Naive thymus-derived CD4-positive, alpha-beta T cell (primary cell): ENCODE measurements at regions of chr10 and their contacts with region 1.

Region 1: GRCh38 chr10:110007701-110008517 is at the start of gene ADD3:
- DNase-seq: peak; percentile 82 to 93 (median 90)
- ATAC-seq: peak; percentile 86
- H3K4me3 ChIP-seq: peak within 1 kb of the TSS; percentile 66
- H3K4me3 Mint-ChIP-seq: peak within 1 kb of the TSS in 2 of 10 donors; percentile 99 to 100
- H3K27ac ChIP-seq: peak within 1 kb of the TSS; percentile 88
- H3K27ac Mint-ChIP-seq: peak within 1 kb of the TSS in 7 of 9 donors; percentile 91 to 98 (median 94)
- H3K4me1 ChIP-seq: peaks cover 33 to 36% of the 10 kb centered on the region in 2 donors
- H3K4me1 Mint-ChIP-seq: peaks cover 28 to 54% (median 44%) of the 10 kb centered on the region in 7 donors
- H3K27me3 ChIP-seq: no peaks in the 10 kb centered on the region
- H3K27me3 Mint-ChIP-seq: peaks cover 0 to 6% (median 0%) of the 10 kb centered on the region in 5 donors
- total RNA-seq, gene ADD3: 281 to 463 (median 342) TPM

Region 2: DNA sequence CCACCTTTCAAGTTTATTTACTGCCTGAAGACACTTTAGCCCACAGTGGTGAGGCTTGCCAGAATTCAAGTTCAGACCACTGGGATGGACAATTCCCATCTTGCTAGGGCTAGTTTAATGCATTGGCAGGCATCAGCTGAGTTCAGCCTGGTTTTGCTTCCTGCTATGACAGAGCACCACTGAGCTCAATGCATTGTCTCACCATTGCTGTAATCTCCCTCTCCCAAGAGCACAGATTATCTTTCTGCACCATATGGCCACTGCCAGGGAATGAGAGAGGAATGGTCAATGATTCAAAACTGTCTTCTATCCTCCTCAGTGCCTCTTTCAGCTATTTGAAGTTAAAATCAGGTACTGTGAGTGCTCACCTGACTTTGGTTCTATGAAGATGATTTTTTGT is 245.4 kb before region 1 on chr10:
- CTCF ChIA-PET with region 1: no interaction called
- POLR2A ChIA-PET with region 1: no interaction called
- intact Hi-C with region 1: no loop called
- DNase-seq: no peak
- ATAC-seq: no peak
- H3K4me3 ChIP-seq: no peak overlapping the region
- H3K4me3 Mint-ChIP-seq: no peak overlapping the region
- H3K27ac ChIP-seq: no peak overlapping the region
- H3K27ac Mint-ChIP-seq: no peak overlapping the region
- H3K4me1 ChIP-seq: no peaks in the 10 kb centered on the region
- H3K4me1 Mint-ChIP-seq: no peaks in the 10 kb centered on the region
- H3K27me3 ChIP-seq: no peaks in the 10 kb centered on the region
- H3K27me3 Mint-ChIP-seq: peaks cover 0 to 16% (median 6%) of the 10 kb centered on the region in 5 donors

Region 3: DNA sequence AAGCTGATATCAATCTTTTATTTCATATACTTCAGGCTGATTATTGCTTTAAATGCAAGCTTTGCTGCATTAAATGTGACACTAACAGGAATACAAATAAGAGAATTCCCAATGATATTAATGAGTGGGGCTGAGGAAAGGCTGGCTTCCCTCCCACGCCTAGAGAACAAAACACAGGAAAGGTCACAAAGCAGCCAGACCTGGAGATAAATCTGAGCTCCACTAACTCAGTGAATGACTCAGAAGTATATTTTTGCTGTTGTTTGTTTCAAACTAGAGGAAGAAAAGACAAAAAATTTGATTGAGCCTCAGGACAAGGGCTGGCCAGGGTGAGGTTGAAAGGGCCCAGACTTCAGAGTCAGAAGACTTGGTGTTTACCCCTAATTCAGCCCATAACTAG is 172.7 kb before region 1 on chr10:
- CTCF ChIA-PET with region 1: no interaction called
- POLR2A ChIA-PET with region 1: no interaction called
- intact Hi-C with region 1: no loop called
- DNase-seq: no peak
- ATAC-seq: no peak
- H3K4me3 ChIP-seq: no peak overlapping the region
- H3K4me3 Mint-ChIP-seq: no peak overlapping the region
- H3K27ac ChIP-seq: no peak overlapping the region
- H3K27ac Mint-ChIP-seq: no peak overlapping the region
- H3K4me1 ChIP-seq: no peaks in the 10 kb centered on the region
- H3K4me1 Mint-ChIP-seq: no peaks in the 10 kb centered on the region
- H3K27me3 ChIP-seq: peaks cover 0 to 6% of the 10 kb centered on the region in 2 donors
- H3K27me3 Mint-ChIP-seq: peaks cover 10 to 27% (median 15%) of the 10 kb centered on the region in 5 donors

Region 4: GRCh38 chr10:109934958-109935706 is 72.8 kb before region 1 on chr10:
- CTCF ChIA-PET with region 1: interaction called, 4 read pairs
- POLR2A ChIA-PET with region 1: interaction called, 3 read pairs
- intact Hi-C with region 1: loop called in 1 of 2 experiments (anchors 1 kb)
- DNase-seq: peak in 8 of 9 donors; percentile 23 to 54 (median 46)
- ATAC-seq: peak; percentile 47
- H3K4me3 ChIP-seq: peak overlapping the region; percentile 33
- H3K4me3 Mint-ChIP-seq: peak overlapping the region; percentile 72 to 97 (median 87)
- H3K27ac ChIP-seq: peak overlapping the region; percentile 64
- H3K27ac Mint-ChIP-seq: peak overlapping the region; percentile 88 to 99 (median 96)
- H3K4me1 ChIP-seq: peaks cover 36 to 56% of the 10 kb centered on the region in 2 donors
- H3K4me1 Mint-ChIP-seq: peaks cover 33 to 83% (median 71%) of the 10 kb centered on the region in 7 donors
- H3K27me3 ChIP-seq: no peaks in the 10 kb centered on the region
- H3K27me3 Mint-ChIP-seq: peaks cover 0 to 8% (median 0%) of the 10 kb centered on the region in 5 donors

Region 5: DNA sequence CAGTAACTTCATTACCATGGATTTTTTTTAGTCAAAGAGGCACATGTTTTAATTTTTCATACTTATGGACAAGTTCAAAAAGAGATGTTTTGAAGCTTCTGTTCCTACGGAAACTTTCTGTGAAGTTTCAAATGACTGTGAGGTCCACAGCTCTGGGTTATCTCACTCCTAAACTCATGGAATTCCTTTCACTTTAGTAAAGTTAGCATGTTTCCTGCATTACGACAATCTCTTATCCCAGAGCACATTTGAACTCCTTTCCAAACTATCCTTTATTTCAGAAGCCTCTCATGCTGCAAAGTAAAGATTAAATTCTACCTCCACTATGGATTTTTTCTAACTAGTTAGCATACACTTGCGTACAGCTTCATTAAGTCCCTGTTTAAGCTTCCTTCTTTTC is 15.4 kb before region 1 on chr10:
- CTCF ChIA-PET with region 1: interaction called, 5 read pairs
- POLR2A ChIA-PET with region 1: interaction called, 4 read pairs
- intact Hi-C with region 1: loop called in 1 of 2 experiments (anchors 1 kb)
- DNase-seq: no peak
- ATAC-seq: no peak
- H3K4me3 ChIP-seq: no peak overlapping the region
- H3K4me3 Mint-ChIP-seq: no peak overlapping the region
- H3K27ac ChIP-seq: no peak overlapping the region
- H3K27ac Mint-ChIP-seq: peak overlapping the region in 1 of 9 donors; percentile 69
- H3K4me1 ChIP-seq: no peaks in the 10 kb centered on the region
- H3K4me1 Mint-ChIP-seq: peaks cover 0 to 34% (median 18%) of the 10 kb centered on the region in 7 donors
- H3K27me3 ChIP-seq: no peaks in the 10 kb centered on the region
- H3K27me3 Mint-ChIP-seq: peaks cover 0 to 22% (median 0%) of the 10 kb centered on the region in 5 donors

Region 6: GRCh38 chr10:110067960-110068770 is 60.3 kb after region 1 on chr10:
- CTCF ChIA-PET with region 1: interaction called, 3 read pairs
- POLR2A ChIA-PET with region 1: interaction called, 11 read pairs
- intact Hi-C with region 1: loop called (anchors 1 to 2 kb)
- DNase-seq: peak in 7 of 9 donors; percentile 40 to 69 (median 52)
- ATAC-seq: peak; percentile 92
- H3K4me3 ChIP-seq: peak overlapping the region; percentile 18
- H3K4me3 Mint-ChIP-seq: peak overlapping the region; percentile 39 to 91 (median 78)
- H3K27ac ChIP-seq: peak overlapping the region; percentile 57
- H3K27ac Mint-ChIP-seq: peak overlapping the region; percentile 83 to 96 (median 92)
- H3K4me1 ChIP-seq: peaks cover 76 to 84% of the 10 kb centered on the region in 2 donors
- H3K4me1 Mint-ChIP-seq: peaks cover 65 to 100% (median 95%) of the 10 kb centered on the region in 7 donors
- H3K27me3 ChIP-seq: no peaks in the 10 kb centered on the region
- H3K27me3 Mint-ChIP-seq: no peaks in the 10 kb centered on the region

Region 7: DNA sequence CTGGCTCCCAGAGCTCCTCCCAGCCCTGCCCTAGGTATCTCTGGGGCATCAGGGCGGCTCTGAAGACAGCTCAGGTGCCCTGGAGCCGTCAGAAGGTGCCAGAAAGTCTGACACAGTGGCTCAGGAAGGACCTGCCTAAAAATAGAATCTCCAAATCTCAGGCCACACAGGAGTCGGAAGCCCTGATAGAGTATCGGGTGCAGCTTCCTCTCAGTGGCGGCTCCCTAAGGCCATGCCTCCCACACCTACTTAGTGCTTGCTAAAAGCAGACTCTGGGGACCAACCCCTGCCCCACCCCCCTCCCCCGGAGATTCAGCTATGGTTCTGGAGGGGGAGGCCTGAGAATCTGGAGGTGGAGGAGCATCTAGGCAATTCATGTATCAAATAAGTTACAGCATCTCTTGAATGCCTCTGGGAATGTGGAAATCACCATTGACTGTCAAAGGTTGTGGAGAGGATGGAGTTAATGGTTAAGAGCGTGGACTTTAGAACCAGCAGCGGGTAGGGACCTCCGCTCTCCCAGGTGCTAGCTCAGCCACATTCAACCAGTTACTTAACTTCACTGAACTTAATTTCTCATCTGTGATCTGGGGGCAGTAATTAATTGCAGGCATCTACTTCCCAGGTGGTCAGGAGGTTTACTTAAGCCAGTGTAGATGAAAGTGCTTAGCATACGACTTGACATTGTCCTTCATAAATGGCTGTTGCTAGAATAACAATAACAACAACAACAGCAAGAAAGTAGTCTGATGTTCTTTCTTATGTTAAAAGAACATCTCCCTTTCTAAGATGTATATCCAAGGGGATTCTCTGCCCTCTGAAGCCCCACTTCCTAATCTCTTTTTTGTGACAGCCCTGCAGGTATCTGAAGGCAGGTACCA is 160.9 kb after region 1 on chr10:
- CTCF ChIA-PET with region 1: no interaction called
- POLR2A ChIA-PET with region 1: no interaction called
- intact Hi-C with region 1: no loop called
- DNase-seq: no peak
- ATAC-seq: peak; percentile 22
- H3K4me3 ChIP-seq: no peak overlapping the region
- H3K4me3 Mint-ChIP-seq: peak overlapping the region in 6 of 10 donors; percentile 21 to 49 (median 33)
- H3K27ac ChIP-seq: no peak overlapping the region
- H3K27ac Mint-ChIP-seq: no peak overlapping the region
- H3K4me1 ChIP-seq: peaks cover 3 to 11% of the 10 kb centered on the region in 2 donors
- H3K4me1 Mint-ChIP-seq: peaks cover 22 to 35% (median 29%) of the 10 kb centered on the region in 7 donors
- H3K27me3 ChIP-seq: peaks cover 4 to 5% of the 10 kb centered on the region in 2 donors
- H3K27me3 Mint-ChIP-seq: peaks cover 64 to 89% (median 74%) of the 10 kb centered on the region in 5 donors

Region 8: GRCh38 chr10:110225756-110226542 is 218.0 kb after region 1 on chr10:
- CTCF ChIA-PET with region 1: no interaction called
- POLR2A ChIA-PET with region 1: interaction called, 3 read pairs
- intact Hi-C with region 1: loop called (anchors 1 kb)
- DNase-seq: peak; percentile 83 to 91 (median 88)
- ATAC-seq: peak; percentile 73
- H3K4me3 ChIP-seq: peak overlapping the region; percentile 75
- H3K4me3 Mint-ChIP-seq: peak overlapping the region; percentile 87 to 99 (median 94)
- H3K27ac ChIP-seq: peak overlapping the region; percentile 92
- H3K27ac Mint-ChIP-seq: peak overlapping the region; percentile 78 to 97 (median 96)
- H3K4me1 ChIP-seq: peaks cover 16 to 27% of the 10 kb centered on the region in 2 donors
- H3K4me1 Mint-ChIP-seq: peaks cover 27 to 68% (median 49%) of the 10 kb centered on the region in 7 donors
- H3K27me3 ChIP-seq: no peaks in the 10 kb centered on the region
- H3K27me3 Mint-ChIP-seq: no peaks in the 10 kb centered on the region

Region 9: DNA sequence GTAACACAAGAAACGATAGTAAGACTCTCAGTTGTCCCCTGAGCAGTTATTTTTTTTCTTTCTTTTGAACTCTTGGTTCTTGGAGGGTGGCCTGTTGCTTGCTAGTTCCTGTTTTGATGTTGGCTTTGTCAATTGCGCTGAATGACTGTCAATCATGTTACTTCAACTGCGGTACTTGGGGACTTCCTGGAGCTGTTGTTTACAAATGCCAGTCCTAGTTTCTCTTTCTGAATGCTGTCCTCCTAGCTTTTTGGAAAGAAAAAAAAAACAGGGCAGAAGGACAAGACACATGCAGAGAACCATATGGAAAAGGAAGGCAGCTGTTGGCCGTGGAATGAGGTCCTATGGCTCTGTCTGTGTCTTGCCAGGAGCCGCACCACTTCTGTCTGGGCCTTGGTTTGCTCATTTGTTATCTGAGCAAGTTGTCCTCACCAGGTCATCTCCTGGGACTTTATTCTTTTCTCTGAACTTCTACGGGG is 856.8 kb after region 1 on chr10:
- CTCF ChIA-PET with region 1: no interaction called
- POLR2A ChIA-PET with region 1: no interaction called
- intact Hi-C with region 1: loop called in 1 of 2 experiments (anchors 5 kb)
- DNase-seq: peak in 7 of 9 donors; percentile 73 to 92 (median 88)
- ATAC-seq: peak; percentile 81
- H3K4me3 ChIP-seq: peak overlapping the region; percentile 46
- H3K4me3 Mint-ChIP-seq: peak overlapping the region; percentile 72 to 88 (median 80)
- H3K27ac ChIP-seq: peak overlapping the region; percentile 100
- H3K27ac Mint-ChIP-seq: peak overlapping the region; percentile 92 to 100 (median 99)
- H3K4me1 ChIP-seq: peaks cover 97 to 98% of the 10 kb centered on the region in 2 donors
- H3K4me1 Mint-ChIP-seq: peaks cover 81 to 100% (median 98%) of the 10 kb centered on the region in 7 donors
- H3K27me3 ChIP-seq: no peaks in the 10 kb centered on the region
- H3K27me3 Mint-ChIP-seq: no peaks in the 10 kb centered on the region